GM13977 (cell line): ENCODE measurements at regions of chr10 and their contacts with region 1.

Region 1: DNA sequence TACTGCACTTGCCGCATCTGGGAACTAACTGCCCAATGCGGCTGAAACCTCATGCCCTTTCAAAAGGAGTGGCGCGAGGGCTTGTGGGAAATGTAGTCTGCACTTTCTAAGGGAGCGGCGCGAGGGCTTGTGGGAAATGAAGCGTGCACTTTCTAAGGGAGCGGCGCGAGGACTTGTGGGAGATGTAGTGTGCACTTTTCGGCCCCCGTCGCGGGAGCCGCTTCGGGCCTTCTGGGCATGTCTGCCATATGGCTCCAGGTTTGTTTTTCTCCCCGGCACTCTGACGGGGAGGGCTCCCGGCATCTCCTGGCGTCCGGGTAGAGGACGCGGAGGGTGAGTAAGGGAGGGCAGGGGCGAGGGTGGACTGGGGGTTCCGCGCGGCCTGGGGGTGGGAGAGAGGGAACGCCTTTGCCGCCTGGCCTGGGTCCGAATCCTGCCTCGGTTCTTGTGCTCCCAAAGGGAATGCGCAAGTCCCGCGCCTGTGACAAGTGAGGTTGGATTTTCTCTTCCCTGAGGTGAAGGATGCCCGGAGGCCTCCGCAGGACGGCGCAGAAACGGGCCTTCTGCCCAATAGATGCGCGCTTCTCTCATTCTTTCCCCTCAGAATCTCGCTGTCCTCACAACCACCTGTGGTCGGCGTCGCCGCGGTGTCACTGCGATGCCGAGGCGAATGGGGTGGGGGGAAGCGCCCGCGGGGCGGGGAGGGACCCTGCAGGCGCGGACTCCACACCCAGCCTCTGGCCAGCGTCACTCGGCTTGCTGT is at the start of gene ZNF37A:
- DNase-seq: peak; percentile 87
- CTCF ChIP-seq: no peak

Region 2: GRCh38 chr10:37857287-37858211 is 236.8 kb before region 1 on chr10 and contains the start of gene ZNF248:
- in situ Hi-C with region 1: loop called (anchors 25 kb)
- DNase-seq: peak; percentile 91
- CTCF ChIP-seq: no peak

Region 3: DNA sequence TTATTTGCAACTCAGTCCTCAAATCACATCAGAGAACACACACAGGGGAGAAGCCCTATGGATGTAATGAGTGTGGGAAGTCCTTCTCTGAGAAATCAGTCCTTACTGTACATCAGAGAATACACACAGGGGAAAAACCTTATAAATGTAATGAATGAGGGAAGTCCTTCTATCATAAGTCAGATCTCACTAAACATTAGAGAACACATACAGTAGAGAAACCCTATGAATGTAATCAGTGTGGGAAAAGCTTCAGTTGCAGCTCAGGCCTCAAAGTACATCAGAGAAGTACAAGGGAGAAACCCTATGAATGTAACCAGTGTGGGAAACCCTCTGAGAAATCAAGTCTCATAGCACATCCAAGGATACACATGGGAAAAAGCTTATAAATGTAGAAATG is 197.9 kb before region 1 on chr10:
- in situ Hi-C with region 1: no loop called
- DNase-seq: no peak
- CTCF ChIP-seq: no peak

Region 4: GRCh38 chr10:38184476-38184875 is 90.1 kb after region 1 on chr10:
- in situ Hi-C with region 1: no loop called
- DNase-seq: no peak
- CTCF ChIP-seq: no peak